ENCODE measurements at regions of chr9 and their contacts with region 1.

Region 1: DNA sequence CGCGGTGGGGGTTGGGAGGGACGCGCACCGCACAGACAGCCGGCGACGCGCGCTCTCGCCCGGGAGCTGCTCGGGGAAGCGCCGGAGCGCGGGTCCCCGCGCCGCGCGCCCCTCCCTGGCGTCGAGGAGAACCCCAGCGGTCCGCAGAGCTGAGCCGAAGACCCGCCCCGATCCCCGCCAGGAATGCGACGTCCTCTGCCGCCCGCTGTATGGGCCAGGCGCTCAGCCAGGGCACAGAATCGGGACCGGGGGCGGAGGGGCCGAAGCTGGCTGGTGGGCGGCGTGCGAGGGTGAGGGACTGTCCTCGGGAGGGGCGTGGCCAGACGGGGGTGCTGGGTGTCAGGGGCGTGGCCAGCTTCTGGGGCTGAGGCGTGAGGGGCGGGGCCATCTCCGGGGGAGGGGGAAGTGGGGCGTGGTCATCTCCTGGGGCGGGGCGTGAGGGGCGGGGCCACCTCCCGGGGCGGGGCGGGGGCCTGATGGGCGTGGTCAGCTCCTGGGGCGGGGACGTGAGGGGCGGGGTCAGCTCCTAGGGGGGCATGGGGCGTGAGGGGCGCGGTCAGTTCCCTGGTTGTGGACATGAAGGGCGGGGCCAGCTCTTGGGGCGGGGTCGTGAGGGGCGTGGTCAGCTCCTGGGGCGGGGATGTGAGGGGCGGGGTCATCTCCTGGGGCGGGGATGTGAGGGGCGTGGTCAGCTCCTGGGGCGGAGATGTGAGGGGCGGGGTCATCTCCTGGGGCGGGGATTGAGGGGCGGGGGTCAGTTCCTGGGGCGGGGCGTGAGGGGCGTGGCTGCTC is 965 bp downstream of the PTGDS start:
- DNase-seq: peak; percentile 68 to 98
- H3K4me3 ChIP-seq: peak overlapping the region; percentile 43 to 73 (median 52)
- H3K27ac ChIP-seq: no peak overlapping the region
- H3K4me1 ChIP-seq: peaks cover 0 to 12% (median 5%) of the 10 kb centered on the region in 4 experiments; a peak in 5 of 7 replicates
- H3K27me3 ChIP-seq: peaks cover 0 to 5% (median 2%) of the 10 kb centered on the region in 4 experiments; a peak in 2 of 7 replicates
- CTCF ChIP-seq: no peak
- EP300 ChIP-seq: no peak
- POLR2A ChIP-seq: no peak
- RAD21 ChIP-seq: no peak

Region 2: DNA sequence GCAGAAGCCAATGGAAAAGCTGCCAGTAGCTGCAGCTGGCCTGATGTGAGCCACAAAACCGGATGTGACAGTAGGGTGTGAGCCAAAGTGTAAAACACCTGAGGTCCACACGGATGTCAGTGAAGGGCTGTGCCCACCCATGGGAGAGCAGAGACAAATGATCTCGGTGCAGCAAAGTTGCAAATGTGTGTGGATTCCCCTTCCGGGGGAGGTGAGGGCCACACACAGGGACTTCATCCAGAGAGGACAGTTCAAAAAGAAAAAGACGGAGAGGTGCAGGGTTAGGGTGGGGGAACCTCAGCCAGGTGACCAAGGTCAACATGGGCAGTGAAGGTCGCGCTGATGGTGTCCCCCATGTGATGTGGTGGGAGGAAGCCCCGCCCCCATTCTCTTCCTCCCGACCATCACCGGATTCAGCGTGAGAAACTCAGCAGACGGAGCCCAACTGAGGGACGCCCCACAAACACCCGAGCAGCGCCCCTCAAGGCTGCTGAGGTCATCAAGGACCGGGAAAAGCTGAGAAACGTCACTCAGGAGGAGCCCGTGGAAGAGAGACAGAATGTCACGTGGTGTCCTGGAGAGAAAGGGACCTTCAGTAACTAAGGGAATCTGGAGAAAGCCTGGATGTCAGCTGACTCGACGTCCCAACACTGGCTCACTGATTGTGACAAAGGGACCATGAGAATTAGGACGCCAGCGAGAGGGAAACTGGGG is 12.3 kb before region 1 on chr9:
- CTCF ChIA-PET with region 1: interaction called, 32 read pairs
- POLR2A ChIA-PET with region 1: interaction called, 10 read pairs
- DNase-seq: no peak
- H3K4me3 ChIP-seq: no peak overlapping the region
- H3K27ac ChIP-seq: no peak overlapping the region
- H3K4me1 ChIP-seq: peaks cover 0 to 7% (median 5%) of the 10 kb centered on the region in 4 experiments; a peak in 4 of 7 replicates
- H3K27me3 ChIP-seq: no peaks in the 10 kb centered on the region
- CTCF ChIP-seq: no peak
- EP300 ChIP-seq: no peak
- POLR2A ChIP-seq: no peak
- RAD21 ChIP-seq: no peak

Region 3: GRCh38 chr9:136991993-136992818 is 13.9 kb after region 1 on chr9 and contains the start of gene PAXX:
- CTCF ChIA-PET with region 1: interaction called, 18 read pairs
- POLR2A ChIA-PET with region 1: interaction called, 5 read pairs
- DNase-seq: peak; percentile 65 to 96
- H3K4me3 ChIP-seq: peak within 1 kb of the TSS; percentile 46 to 89 (median 74)
- H3K27ac ChIP-seq: peak within 1 kb of the TSS; percentile 3; the same call in 1 of the 2 replicates
- H3K4me1 ChIP-seq: peaks cover 0 to 16% (median 7%) of the 10 kb centered on the region in 4 experiments; a peak in 6 of 7 replicates
- H3K27me3 ChIP-seq: peaks cover 0 to 17% (median 12%) of the 10 kb centered on the region in 4 experiments; a peak in 3 of 7 replicates
- CTCF ChIP-seq: no peak
- EP300 ChIP-seq: no peak
- POLR2A ChIP-seq: no peak; a peak in 1 of 3 replicates
- RAD21 ChIP-seq: no peak
- total RNA-seq, gene PAXX: 40.8 and 43.4 TPM in 2 replicates

Region 4: DNA sequence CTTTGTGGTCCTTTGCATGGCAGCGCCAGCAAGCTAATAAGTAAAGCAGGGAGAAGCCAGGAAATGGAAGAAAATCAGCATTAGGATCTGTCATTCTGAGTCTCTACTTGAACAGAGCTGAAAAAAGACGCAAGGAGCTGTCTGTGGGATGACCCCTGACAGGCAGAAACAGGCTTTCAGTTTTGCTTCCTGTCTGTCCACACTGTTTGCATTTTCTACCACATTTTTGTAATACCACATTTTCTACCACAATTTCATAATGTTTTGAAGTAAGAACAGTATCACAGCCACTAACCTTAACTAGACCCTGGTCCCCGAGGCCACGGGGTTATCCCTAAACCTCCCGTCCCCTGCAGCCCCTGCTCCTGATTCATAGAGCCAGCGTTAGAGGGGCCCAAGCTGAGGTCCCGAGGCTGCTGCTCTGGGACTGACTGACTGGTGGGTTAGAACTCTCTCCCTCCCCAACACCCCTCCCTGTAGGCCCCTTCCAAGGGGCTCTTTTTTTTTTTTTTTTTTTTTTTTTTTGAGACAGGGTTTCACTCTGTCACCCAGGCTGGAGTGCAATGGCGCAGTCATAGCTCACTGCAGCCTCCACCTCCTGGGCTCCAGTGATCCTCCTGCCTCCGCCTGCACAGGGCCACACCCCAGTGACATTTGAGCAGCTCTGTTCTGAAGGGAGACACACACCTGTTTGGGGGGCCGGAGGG is 22.1 kb after region 1 on chr9:
- CTCF ChIA-PET with region 1: interaction called, 18 read pairs
- POLR2A ChIA-PET with region 1: interaction called, 5 read pairs
- DNase-seq: no peak
- H3K4me3 ChIP-seq: no peak overlapping the region
- H3K27ac ChIP-seq: no peak overlapping the region
- H3K4me1 ChIP-seq: peaks cover 0 to 16% (median 8%) of the 10 kb centered on the region in 4 experiments; a peak in 6 of 7 replicates
- H3K27me3 ChIP-seq: no peaks in the 10 kb centered on the region; a peak in 1 of 7 replicates
- CTCF ChIP-seq: no peak
- EP300 ChIP-seq: no peak
- POLR2A ChIP-seq: no peak
- RAD21 ChIP-seq: no peak

Region 5: DNA sequence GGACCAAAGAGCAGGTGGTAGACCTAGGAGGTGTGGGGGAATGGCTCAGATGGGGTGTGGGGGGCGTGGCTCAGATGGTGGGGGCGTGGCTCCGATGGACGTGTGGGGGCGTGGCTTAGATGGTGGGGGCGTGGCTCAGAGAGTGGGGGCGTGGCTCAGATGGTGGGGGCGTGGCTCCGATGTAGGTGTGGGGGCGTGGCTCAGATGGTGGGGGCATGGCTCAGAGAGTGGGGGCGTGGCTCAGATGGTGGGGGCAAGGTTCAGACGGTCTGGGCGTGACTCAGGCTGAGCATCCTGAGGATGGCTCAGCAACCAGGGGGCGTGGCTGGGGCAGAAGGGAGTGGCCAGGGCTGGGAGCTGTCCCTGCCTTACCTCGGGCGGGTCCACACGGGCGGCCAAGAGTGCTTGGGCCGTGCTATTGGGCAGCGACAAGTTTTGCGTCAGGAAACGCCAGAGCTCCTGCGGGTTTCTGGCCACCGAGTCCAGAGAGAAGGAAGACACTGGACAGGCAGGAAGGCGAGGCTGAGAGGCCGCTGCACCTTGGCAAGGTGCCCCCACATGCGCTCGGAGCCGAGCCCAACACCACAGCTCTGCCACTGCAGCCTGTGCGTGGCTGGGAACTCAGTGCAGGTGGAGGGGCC is 43.8 kb after region 1 on chr9:
- CTCF ChIA-PET with region 1: interaction called, 21 read pairs
- POLR2A ChIA-PET with region 1: no interaction called
- DNase-seq: peak; percentile 90 to 95
- H3K4me3 ChIP-seq: no peak overlapping the region
- H3K27ac ChIP-seq: no peak overlapping the region
- H3K4me1 ChIP-seq: peaks cover 0 to 9% (median 3%) of the 10 kb centered on the region in 4 experiments; a peak in 4 of 7 replicates
- H3K27me3 ChIP-seq: peaks cover 0 to 9% (median 4%) of the 10 kb centered on the region in 4 experiments; a peak in 5 of 7 replicates
- CTCF ChIP-seq: no peak
- EP300 ChIP-seq: no peak
- POLR2A ChIP-seq: no peak
- RAD21 ChIP-seq: no peak

Region 6: GRCh38 chr9:137070201-137070905 is 92.1 kb after region 1 on chr9 and contains the start of gene SAPCD2:
- CTCF ChIA-PET with region 1: interaction called, 18 read pairs
- POLR2A ChIA-PET with region 1: no interaction called
- DNase-seq: peak; percentile 75 to 84
- H3K4me3 ChIP-seq: peak within 1 kb of the TSS; percentile 46 to 64 (median 48)
- H3K27ac ChIP-seq: no peak within 1 kb of the TSS; the same call in 1 of the 2 replicates
- H3K4me1 ChIP-seq: peaks cover 0 to 27% (median 21%) of the 10 kb centered on the region in 4 experiments; a peak in 6 of 7 replicates
- H3K27me3 ChIP-seq: peaks cover 0 to 18% (median 7%) of the 10 kb centered on the region in 4 experiments; a peak in 5 of 7 replicates
- CTCF ChIP-seq: no peak
- EP300 ChIP-seq: 0 out of 3 replicates have a peak, but pooled peaks of 1 of the 2 experiments have one; percentile 18
- POLR2A ChIP-seq: peak in 1 of 2 experiments; percentile 49; a peak in 1 of 3 replicates
- RAD21 ChIP-seq: no peak
- total RNA-seq, gene SAPCD2: 30.3 and 32.1 TPM in 2 replicates

Measured in H1 (cell line).